PC-3 (cell line): ENCODE measurements at regions of chr4 and their contacts with region 1.

Region 1: DNA sequence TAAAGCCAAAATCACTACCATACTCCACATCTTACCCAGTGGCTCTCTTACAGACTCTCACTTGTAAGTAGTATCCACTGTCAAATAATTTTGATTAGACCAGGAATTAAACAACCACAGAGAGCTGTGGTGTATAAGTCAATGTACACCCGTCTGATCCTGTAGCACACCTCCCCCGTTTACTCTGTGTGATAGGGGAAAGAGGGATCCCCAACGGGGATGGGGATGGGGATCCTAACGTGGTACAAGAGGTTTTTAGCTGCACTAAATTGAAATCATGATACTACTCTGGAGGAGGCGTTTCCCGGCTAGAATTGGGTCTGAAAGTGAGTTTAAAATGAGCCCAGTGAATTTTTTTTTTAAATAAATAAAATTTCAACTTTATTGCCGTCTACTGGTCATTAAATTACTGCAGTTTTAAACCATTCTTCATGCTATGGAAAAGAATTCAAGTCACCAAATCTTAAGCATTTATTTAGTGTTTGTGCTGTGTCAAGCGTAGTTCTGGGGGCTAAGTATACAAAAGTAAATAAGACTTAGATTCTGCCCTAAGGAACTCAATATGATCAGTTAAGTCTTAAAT is 76.6 kb downstream of the INTS12 start:
- DNase-seq: peak; percentile 66
- ATAC-seq: peak; percentile 19
- H3K4me3 ChIP-seq: no peak overlapping the region
- H3K27ac ChIP-seq: peak overlapping the region; percentile 93
- H3K4me1 ChIP-seq: peaks cover 38% of the 10 kb centered on the region
- H3K27me3 ChIP-seq: no peaks in the 10 kb centered on the region
- CTCF ChIP-seq: peak; percentile 58

Region 2: DNA sequence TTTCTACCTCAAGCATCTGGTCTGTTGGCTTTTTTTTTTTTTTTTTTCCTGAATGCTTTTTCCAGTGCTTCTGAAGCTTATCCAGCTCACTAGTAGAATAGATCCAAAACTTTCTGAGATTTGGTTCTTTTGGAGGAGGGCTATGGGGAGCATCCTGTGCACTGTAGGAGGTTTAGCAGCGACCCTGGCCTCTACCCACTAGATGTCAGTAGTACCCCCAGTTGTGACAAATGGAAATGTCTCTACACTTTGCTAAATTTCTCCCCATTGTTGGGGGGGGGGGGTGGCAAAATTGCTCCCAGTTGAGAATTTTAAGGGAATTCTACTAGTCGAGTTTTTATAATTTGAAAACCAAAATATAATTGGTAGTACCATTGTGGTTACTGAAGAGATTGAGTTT is 135.0 kb before region 1 on chr4:
- CTCF ChIA-PET with region 1: interaction called, 3 read pairs
- POLR2A ChIA-PET with region 1: no interaction called
- intact Hi-C with region 1: loop called (anchors 5 kb)
- DNase-seq: peak; percentile 29
- ATAC-seq: peak; percentile 62; the same call in 1 of the 2 replicates
- H3K4me3 ChIP-seq: no peak overlapping the region
- H3K27ac ChIP-seq: no peak overlapping the region
- H3K4me1 ChIP-seq: peaks cover 15% of the 10 kb centered on the region
- H3K27me3 ChIP-seq: no peaks in the 10 kb centered on the region
- CTCF ChIP-seq: peak; percentile 58

Region 3: GRCh38 chr4:105551965-105552746 is 79.8 kb before region 1 on chr4 and contains the start of gene ARHGEF38:
- CTCF ChIA-PET with region 1: interaction called, 4 read pairs
- POLR2A ChIA-PET with region 1: interaction called, 3 read pairs
- intact Hi-C with region 1: loop called (anchors 2 kb)
- DNase-seq: peak; percentile 89
- ATAC-seq: peak; percentile 84
- H3K4me3 ChIP-seq: peak within 1 kb of the TSS; percentile 58
- H3K27ac ChIP-seq: peak within 1 kb of the TSS; percentile 99
- H3K4me1 ChIP-seq: peaks cover 52% of the 10 kb centered on the region
- H3K27me3 ChIP-seq: no peaks in the 10 kb centered on the region
- CTCF ChIP-seq: no peak
- total RNA-seq, gene ARHGEF38: 2.0 and 5.9 TPM in 2 replicates

Region 4: GRCh38 chr4:105605493-105605892 is 26.4 kb before region 1 on chr4:
- CTCF ChIA-PET with region 1: no interaction called
- POLR2A ChIA-PET with region 1: no interaction called
- intact Hi-C with region 1: loop called (anchors 2 kb)
- DNase-seq: peak; percentile 9
- ATAC-seq: no peak
- H3K4me3 ChIP-seq: no peak overlapping the region
- H3K27ac ChIP-seq: no peak overlapping the region
- H3K4me1 ChIP-seq: peaks cover 7% of the 10 kb centered on the region
- H3K27me3 ChIP-seq: no peaks in the 10 kb centered on the region
- CTCF ChIP-seq: no peak

Region 5: DNA sequence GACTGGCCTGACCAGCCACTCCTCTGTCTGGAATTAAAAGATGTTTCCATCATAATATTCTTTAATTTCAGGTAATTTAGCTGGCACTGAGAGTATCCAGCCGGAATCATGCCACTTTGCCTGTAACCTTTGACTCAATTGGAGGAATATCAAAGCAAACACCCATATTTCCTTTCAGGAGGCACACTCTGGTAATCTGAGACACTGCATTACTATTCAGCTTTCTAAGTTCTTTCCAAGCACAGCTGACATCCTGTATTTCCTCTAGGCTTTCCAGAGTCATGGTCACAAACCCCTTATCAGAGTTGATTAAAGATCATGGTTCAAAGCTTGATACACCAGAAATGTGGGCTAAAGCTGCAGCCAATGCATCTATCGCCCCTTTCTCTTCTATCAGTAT is 47.3 kb after region 1 on chr4:
- CTCF ChIA-PET with region 1: no interaction called
- POLR2A ChIA-PET with region 1: no interaction called
- intact Hi-C with region 1: loop called (anchors 5 kb)
- DNase-seq: peak; percentile 65
- ATAC-seq: peak; percentile 69
- H3K4me3 ChIP-seq: no peak overlapping the region
- H3K27ac ChIP-seq: no peak overlapping the region
- H3K4me1 ChIP-seq: peaks cover 54% of the 10 kb centered on the region
- H3K27me3 ChIP-seq: no peaks in the 10 kb centered on the region
- CTCF ChIP-seq: no peak